Activated naive CD4-positive, alpha-beta T cell treated with anti-CD3 and anti-CD28 coated beads, Interleukin-2, amount 10 ng/mL, durations not matched to agents 7 days and 5 days (primary cell): ENCODE measurements at regions of chr15 and their contacts with region 1.

Region 1: DNA sequence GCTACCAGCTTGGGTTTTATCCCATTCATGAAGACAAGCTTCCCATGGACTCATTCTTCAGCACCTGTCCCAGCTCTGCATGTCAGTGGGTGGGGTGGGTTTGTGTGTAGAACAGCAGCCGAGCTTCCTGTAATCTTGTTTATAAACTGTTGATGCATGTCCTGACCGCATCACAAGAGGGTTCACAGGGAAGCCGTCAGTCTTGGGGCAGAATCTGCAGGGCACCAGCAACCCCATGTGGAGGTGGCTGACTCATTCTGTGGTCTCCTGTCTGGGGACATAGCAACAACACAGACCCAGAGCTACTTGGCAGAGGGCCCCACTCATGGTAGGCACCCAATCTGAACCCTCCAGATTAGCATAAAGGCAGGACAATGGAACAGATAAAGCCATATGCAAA is 35.6 kb downstream of the DAPK2 start:
- DNase-seq: peak; percentile 92
- H3K4me3 Mint-ChIP-seq: peak overlapping the region; percentile 18
- H3K27ac Mint-ChIP-seq: peak overlapping the region; percentile 91
- H3K4me1 Mint-ChIP-seq: peaks cover 41% of the 10 kb centered on the region
- H3K27me3 Mint-ChIP-seq: peaks cover 4% of the 10 kb centered on the region

Region 2: GRCh38 chr15:63694184-63694583 is 316.5 kb before region 1 on chr15:
- CTCF ChIA-PET with region 1: no interaction called
- DNase-seq: no peak
- H3K4me3 Mint-ChIP-seq: no peak overlapping the region
- H3K27ac Mint-ChIP-seq: no peak overlapping the region
- H3K4me1 Mint-ChIP-seq: no peaks in the 10 kb centered on the region
- H3K27me3 Mint-ChIP-seq: no peaks in the 10 kb centered on the region

Region 3: GRCh38 chr15:63970621-63971426 is 39.9 kb before region 1 on chr15:
- CTCF ChIA-PET with region 1: interaction called, 21 read pairs
- DNase-seq: peak; percentile 36
- H3K4me3 Mint-ChIP-seq: peak overlapping the region; percentile 27
- H3K27ac Mint-ChIP-seq: peak overlapping the region; percentile 95
- H3K4me1 Mint-ChIP-seq: peaks cover 41% of the 10 kb centered on the region
- H3K27me3 Mint-ChIP-seq: peaks cover 5% of the 10 kb centered on the region

Region 4: GRCh38 chr15:64046347-64047153 is 35.8 kb after region 1 on chr15 and contains the start of gene DAPK2:
- CTCF ChIA-PET with region 1: interaction called, 10 read pairs
- DNase-seq: peak; percentile 73
- H3K4me3 Mint-ChIP-seq: peak within 1 kb of the TSS; percentile 64
- H3K27ac Mint-ChIP-seq: peak within 1 kb of the TSS; percentile 19
- H3K4me1 Mint-ChIP-seq: peaks cover 4% of the 10 kb centered on the region
- H3K27me3 Mint-ChIP-seq: peaks cover 70% of the 10 kb centered on the region